GM10248 (cell line): ENCODE measurements at regions of chr3 and their contacts with region 1.

Region 1: GRCh38 chr3:50192689-50193141 is 1.3 kb downstream of the GNAT1 start:
- DNase-seq: peak; percentile 85
- CTCF ChIP-seq: peak; percentile 97

Region 2: DNA sequence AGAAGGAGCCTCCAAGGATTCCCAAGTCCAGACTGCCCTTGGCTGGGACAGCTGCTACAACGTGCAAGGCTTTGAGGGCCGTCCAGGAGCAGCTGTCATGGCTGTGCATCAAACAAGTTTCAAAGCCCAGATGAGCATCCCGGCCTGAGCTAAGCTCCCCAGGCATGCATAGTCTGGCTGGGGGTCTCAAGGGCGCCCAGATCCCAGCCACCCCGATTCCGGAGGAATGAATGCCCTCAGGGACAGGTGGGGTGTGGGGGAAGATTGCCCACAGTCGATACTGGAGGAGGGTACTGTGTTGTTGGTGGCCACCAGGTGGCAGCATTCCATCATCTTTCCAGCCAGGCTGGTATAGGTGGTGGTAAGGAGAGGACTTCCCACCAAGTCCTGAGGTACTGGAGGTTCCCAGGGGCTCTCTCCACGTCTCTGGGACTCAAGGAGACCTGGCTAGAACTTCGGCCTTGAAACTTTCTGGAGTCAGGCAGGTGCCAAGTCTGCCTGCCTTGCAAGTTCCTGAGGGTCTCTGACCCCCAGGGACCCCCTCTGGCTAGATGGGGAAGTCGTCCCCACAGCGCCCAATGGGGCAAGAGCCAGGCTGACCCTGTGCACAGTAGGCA is 71.2 kb before region 1 on chr3:
- CTCF ChIA-PET with region 1: interaction called, 13 read pairs
- POLR2A ChIA-PET with region 1: no interaction called
- DNase-seq: peak; percentile 87
- CTCF ChIP-seq: peak; percentile 62

Region 3: GRCh38 chr3:50205414-50206276 is 12.9 kb after region 1 on chr3:
- CTCF ChIA-PET with region 1: interaction called, 393 read pairs
- POLR2A ChIA-PET with region 1: no interaction called
- DNase-seq: no peak
- CTCF ChIP-seq: no peak

Region 4: DNA sequence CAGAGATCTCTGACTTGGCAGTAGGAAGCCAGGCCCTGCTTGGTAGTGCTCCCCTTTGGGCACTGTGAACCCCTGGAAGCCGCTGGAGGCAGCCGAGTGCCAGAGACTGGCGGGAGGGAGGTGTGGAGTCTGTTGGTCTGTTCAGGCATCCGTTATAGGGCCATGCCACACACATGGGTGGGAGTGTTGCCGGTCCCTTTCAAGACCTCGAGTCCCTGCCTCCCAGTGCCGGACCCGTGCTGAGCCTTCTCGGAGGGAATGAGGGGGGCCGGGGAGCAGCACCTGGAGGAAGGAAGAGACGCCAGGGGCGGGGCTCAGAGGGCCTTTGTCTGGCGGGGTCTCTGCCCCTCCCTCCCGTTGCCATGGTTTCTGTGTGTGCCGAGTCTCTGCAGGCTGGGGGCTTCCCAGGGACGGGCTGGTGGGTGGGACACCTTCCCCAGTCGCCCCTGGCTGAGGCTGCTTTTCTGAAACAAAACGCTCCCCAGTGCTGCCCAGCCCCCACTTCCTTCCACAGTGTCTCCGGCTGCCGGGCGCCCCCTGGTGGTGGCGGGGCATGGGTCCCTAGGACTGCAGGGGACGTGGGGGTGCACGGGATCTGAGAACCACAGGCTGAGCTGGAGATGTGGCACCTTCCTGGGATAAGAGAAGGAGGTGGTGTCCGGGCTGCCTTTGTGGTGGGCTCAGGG is 53.3 kb after region 1 on chr3:
- CTCF ChIA-PET with region 1: interaction called, 39 read pairs
- POLR2A ChIA-PET with region 1: no interaction called
- DNase-seq: peak; percentile 87
- CTCF ChIP-seq: peak; percentile 99

Region 5: DNA sequence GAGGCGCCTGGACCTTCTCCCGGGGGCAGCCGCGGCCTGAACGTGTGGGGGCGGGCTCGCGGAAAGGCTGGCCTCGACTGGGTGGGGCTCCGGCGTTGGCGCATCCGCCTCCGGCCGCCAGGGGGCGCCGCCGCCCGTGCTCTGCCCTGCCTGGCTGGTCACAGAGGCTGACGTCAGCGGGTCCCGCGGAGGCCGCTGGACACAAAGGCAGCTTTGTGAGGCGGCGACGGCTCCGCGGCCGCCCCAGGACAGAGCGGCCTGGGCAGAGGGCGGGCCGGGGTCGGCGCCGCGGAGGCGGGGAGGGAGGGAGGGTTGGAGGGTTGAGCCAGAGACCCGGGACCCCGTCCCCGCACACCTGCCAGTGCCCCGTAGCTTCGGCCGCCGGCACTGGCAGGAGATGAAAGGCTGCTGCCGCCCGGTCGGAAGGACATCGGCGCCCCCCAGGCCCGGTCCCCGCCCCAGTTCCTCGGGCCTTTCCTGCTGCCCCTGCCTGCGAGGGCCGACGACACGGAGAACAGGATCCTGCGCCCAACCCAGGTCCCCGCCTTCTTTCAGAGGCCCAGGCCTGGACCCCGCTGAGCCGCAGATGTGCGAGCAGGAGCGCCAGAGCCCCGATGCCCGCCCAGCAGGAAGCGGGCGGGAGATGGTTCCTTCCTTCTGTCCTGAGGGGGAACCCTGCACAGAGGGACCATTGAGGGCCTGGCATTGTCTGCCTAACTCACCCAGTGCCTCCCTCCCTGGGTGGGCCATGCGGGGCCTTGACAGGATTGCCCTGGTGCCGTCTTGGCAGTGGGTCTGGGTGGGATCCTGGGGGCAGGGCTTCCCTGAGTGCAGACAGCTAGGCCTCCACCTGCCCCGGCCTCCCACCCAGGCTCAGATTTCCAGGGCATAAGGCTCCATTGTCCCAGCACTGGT is 67.6 kb after region 1 on chr3:
- CTCF ChIA-PET with region 1: interaction called, 30 read pairs
- POLR2A ChIA-PET with region 1: no interaction called
- DNase-seq: peak; percentile 98
- CTCF ChIP-seq: peak; percentile 99

Region 6: DNA sequence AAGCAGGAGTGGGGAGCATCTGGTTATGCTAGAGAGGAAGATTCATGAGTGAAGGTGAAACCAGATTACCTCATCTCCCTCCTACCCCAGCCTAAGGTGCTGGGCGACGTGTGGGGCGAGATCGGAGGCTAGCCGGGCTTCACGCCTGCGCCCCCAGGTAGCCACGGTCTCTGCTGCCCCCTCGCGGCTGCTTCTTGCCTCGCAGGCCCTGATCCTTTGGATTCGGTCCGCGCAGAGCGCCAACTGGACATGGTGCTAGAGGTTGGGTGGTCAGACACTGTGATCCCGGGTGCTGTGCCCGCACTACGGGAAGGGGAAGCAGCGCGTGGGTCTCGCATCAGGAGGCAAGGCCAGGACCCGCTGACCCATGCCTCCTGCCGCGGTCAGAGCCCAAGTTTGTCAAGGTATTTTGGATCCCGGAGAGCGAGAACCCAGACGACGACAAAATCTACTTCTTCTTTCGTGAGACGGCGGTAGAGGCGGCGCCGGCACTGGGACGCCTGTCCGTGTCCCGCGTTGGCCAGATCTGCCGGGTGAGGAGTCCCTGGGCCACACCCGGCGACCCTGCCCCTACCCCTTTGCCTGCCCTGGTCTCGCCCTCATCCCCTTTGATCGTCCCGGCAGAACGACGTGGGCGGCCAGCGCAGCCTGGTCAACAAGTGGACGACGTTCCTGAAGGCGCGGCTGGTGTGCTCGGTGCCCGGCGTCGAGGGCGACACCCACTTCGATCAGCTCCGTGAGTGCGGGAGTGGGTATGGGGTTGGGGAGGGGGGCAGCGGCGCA is 80.4 kb after region 1 on chr3:
- CTCF ChIA-PET with region 1: interaction called, 15 read pairs
- POLR2A ChIA-PET with region 1: no interaction called
- DNase-seq: peak; percentile 98
- CTCF ChIP-seq: peak; percentile 98